Caco-2 (cell line): ENCODE measurements at regions of chr6 and their contacts with region 1.

Region 1: DNA sequence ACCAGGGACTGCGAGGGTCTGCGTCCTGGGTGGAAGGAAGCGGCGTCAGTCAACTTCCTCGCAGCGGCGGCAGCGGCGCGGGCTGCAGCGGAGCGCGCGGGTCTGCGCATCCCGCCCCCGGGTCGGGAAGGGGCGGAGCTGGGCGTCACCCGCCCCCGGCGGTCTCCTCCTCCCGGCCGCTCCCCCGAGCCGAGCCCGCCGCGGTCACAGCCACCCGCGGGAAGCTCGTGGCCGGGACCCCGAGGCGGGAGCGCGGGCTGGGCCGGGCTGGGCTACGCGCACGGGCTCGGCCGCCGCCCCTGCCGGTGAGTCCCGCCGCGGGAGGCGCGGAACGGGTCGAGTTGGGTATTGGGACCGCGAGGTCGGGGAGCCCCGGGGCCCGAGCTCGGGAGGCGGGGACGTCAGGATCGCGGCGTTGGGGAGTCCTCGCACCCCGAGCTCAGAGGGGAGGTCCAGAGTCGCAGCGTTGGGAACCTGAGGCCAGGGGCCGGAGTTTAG is at the start of gene PAQR8:
- DNase-seq: peak; percentile 47 to 81
- H3K4me3 ChIP-seq: peak within 1 kb of the TSS; percentile 93
- H3K4me3 Mint-ChIP-seq: peak within 1 kb of the TSS; percentile 74
- H3K27ac Mint-ChIP-seq: peak within 1 kb of the TSS; percentile 75
- H3K4me1 ChIP-seq: peaks cover 26% of the 10 kb centered on the region
- H3K4me1 Mint-ChIP-seq: no peaks in the 10 kb centered on the region
- H3K27me3 ChIP-seq: no peaks in the 10 kb centered on the region
- H3K27me3 Mint-ChIP-seq: no peaks in the 10 kb centered on the region
- CTCF ChIP-seq: no peak
- total RNA-seq, gene PAQR8: 8.7 and 10.0 TPM in 2 replicates

Region 2: DNA sequence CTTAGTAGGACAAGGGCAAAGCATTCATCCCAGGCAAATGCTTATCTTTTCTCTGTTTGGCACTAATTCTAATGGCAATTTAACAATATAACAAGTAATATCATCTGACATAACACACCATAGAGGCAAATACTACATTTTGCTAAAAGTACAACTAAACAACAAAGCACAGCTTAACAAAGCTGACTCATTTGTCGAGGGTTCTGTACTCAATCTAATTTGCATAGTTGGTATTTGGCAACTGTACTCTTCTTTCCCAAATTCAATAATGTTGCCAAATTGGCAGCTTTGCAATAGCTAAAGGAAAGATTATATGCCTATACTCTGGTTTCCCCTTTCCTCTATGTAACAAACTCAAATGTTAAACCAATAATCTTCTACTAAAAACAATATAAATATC is 735.6 kb before region 1 on chr6:
- CTCF ChIA-PET with region 1: no interaction called
- POLR2A ChIA-PET with region 1: no interaction called
- intact Hi-C with region 1: no loop called
- DNase-seq: no peak
- H3K4me3 ChIP-seq: no peak overlapping the region
- H3K4me3 Mint-ChIP-seq: no peak overlapping the region
- H3K27ac Mint-ChIP-seq: no peak overlapping the region
- H3K4me1 ChIP-seq: no peaks in the 10 kb centered on the region
- H3K4me1 Mint-ChIP-seq: no peaks in the 10 kb centered on the region
- H3K27me3 ChIP-seq: no peaks in the 10 kb centered on the region
- H3K27me3 Mint-ChIP-seq: peaks cover 3% of the 10 kb centered on the region
- CTCF ChIP-seq: no peak

Region 3: DNA sequence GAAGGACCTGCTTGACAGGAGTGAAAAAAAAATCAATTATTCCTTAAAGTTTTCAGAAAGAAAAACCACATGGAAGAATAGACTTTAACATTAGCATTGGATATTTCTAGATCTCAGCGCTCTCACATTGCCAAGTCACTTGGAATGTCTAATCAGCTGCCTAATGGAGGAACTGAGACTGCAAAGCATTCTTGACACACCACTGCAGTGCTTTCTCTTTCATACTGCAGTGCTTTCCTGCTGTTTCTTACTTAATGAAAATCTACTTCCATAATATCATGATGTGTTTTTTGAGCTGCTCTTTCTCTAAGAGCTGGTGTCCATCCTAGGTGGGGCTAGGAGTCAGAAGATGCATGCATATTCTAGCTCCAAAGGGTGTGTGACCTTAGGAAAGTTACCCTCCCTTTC is 57.0 kb before region 1 on chr6:
- CTCF ChIA-PET with region 1: interaction called, 5 read pairs
- POLR2A ChIA-PET with region 1: no interaction called
- intact Hi-C with region 1: loop called (anchors 5 kb)
- DNase-seq: no peak
- H3K4me3 ChIP-seq: no peak overlapping the region
- H3K4me3 Mint-ChIP-seq: no peak overlapping the region
- H3K27ac Mint-ChIP-seq: peak overlapping the region; percentile 98
- H3K4me1 ChIP-seq: peaks cover 51% of the 10 kb centered on the region
- H3K4me1 Mint-ChIP-seq: peaks cover 38% of the 10 kb centered on the region
- H3K27me3 ChIP-seq: no peaks in the 10 kb centered on the region
- H3K27me3 Mint-ChIP-seq: no peaks in the 10 kb centered on the region
- CTCF ChIP-seq: no peak

Region 4: DNA sequence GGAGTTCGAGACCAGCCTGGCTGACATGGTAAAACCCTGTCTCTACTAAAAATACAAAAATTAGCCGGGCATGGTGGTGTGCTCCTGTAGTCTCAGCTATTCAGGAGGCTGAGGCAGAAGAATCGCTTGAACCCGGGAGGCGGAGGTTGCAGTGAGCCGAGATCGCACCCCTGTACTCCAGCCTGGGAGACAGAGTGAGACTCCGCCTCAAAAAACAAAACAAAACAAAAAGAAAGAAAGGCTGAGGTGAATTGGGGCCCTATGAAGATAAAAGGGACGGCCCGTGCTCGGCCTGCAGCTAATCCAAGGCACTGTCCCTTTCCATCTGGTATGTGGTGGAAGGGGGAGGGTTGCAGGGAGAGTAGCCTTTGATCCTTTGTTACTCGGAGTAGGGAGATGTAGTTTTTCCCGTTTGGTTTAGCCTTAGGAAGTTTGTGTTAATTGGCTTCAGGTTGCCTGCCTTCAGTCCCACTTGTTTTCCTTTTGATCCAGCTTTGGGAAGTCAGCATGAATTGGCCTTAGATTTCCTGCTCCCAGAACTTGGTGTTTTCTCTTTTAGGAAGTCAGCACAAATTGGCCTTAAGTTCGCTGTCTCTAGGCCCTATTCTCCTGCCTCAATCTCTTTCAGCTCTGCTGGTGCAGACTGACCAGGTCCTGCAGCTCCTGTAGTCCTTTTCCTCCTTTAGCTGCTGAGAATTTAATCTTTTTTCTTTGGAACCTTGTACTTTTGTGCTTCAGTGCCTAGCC is 36.1 kb before region 1 on chr6:
- CTCF ChIA-PET with region 1: no interaction called
- POLR2A ChIA-PET with region 1: no interaction called
- intact Hi-C with region 1: loop called (anchors 1 kb)
- DNase-seq: peak; percentile 85 to 91
- H3K4me3 ChIP-seq: no peak overlapping the region
- H3K4me3 Mint-ChIP-seq: peak overlapping the region; percentile 28
- H3K27ac Mint-ChIP-seq: peak overlapping the region; percentile 88
- H3K4me1 ChIP-seq: peaks cover 62% of the 10 kb centered on the region
- H3K4me1 Mint-ChIP-seq: peaks cover 63% of the 10 kb centered on the region
- H3K27me3 ChIP-seq: no peaks in the 10 kb centered on the region
- H3K27me3 Mint-ChIP-seq: no peaks in the 10 kb centered on the region
- CTCF ChIP-seq: no peak

Region 5: DNA sequence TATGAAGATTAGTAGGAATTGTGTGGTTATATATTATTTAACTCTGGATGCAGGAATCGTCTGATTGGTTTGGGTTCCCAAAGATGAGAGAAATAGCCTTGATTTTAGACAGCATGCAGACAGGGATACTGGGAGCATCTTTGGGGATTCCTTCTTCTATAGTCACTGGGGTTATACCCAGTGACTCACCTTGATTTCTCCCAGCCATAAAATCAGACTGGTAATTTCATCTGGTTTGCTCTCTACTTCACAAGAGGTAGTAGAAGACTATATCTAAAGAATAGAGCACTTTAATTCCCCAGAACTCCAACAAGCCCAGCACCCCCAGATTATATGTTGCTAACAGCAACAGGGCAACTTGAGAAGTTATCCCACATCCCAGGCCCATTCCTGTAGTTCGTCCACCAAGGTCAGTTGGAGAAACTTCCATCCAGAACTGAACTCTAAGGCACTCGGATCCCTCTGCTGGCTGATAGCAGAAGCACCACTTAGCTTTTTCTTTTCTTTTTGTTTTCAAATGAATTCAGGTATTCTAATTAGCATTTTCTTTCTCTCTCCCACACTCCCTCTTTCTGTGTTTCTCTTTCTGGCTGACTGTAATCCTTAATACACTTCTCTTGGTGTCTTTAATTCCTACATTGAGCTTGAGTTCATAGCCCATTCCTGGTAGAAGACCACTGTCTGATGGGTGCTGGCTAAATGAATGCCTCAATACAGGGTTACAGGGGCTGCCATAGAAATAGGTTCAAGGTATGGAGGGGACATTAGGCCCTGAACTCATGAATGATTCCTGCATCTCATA is 37.7 kb after region 1 on chr6:
- CTCF ChIA-PET with region 1: no interaction called
- POLR2A ChIA-PET with region 1: no interaction called
- intact Hi-C with region 1: loop called (anchors 5 kb)
- DNase-seq: peak; percentile 39 to 56
- H3K4me3 ChIP-seq: no peak overlapping the region
- H3K4me3 Mint-ChIP-seq: no peak overlapping the region
- H3K27ac Mint-ChIP-seq: no peak overlapping the region
- H3K4me1 ChIP-seq: no peaks in the 10 kb centered on the region
- H3K4me1 Mint-ChIP-seq: no peaks in the 10 kb centered on the region
- H3K27me3 ChIP-seq: no peaks in the 10 kb centered on the region
- H3K27me3 Mint-ChIP-seq: no peaks in the 10 kb centered on the region
- CTCF ChIP-seq: peak; percentile 79 to 84